ENCODE measurements at regions of chr10 and their contacts with region 1.

Region 1: GRCh38 chr10:96826438-96826837 is 5.7 kb upstream of the LCOR start:
- DNase-seq: no peak
- H3K4me3 ChIP-seq: no peak overlapping the region
- H3K27ac ChIP-seq: peak overlapping the region in 2 of 8 donors; percentile 8 to 19
- H3K4me1 ChIP-seq: peaks cover 9 to 23% (median 16%) of the 10 kb centered on the region in 6 donors
- H3K27me3 ChIP-seq: no peaks in the 10 kb centered on the region
- CTCF ChIP-seq: no peak
- POLR2A ChIP-seq: no peak

Region 2: GRCh38 chr10:96743988-96744585 is 82.4 kb before region 1 on chr10:
- intact Hi-C with region 1: no loop called
- DNase-seq: no peak
- H3K4me3 ChIP-seq: no peak overlapping the region
- H3K27ac ChIP-seq: peak overlapping the region in 5 of 8 donors; percentile 13 to 50 (median 39)
- H3K4me1 ChIP-seq: peaks cover 3 to 93% (median 71%) of the 10 kb centered on the region in 6 donors
- H3K27me3 ChIP-seq: no peaks in the 10 kb centered on the region
- CTCF ChIP-seq: peak in 7 of 11 experiments; percentile 23 to 49 (median 33)
- POLR2A ChIP-seq: no peak

Region 3: GRCh38 chr10:96765406-96766240 is 60.8 kb before region 1 on chr10:
- intact Hi-C with region 1: loop called (anchors 10 kb)
- DNase-seq: peak; percentile 91
- H3K4me3 ChIP-seq: no peak overlapping the region
- H3K27ac ChIP-seq: peak overlapping the region in 3 of 8 donors; percentile 30 to 63 (median 39)
- H3K4me1 ChIP-seq: peaks cover 7 to 30% (median 23%) of the 10 kb centered on the region in 6 donors
- H3K27me3 ChIP-seq: no peaks in the 10 kb centered on the region
- CTCF ChIP-seq: peak; percentile 63 to 90 (median 84)
- POLR2A ChIP-seq: no peak

Measured in spleen (tissue), 13 donors.